Stomach (tissue), 19 donors: ENCODE measurements at regions of chr18 and their contacts with region 1.

Region 1: DNA sequence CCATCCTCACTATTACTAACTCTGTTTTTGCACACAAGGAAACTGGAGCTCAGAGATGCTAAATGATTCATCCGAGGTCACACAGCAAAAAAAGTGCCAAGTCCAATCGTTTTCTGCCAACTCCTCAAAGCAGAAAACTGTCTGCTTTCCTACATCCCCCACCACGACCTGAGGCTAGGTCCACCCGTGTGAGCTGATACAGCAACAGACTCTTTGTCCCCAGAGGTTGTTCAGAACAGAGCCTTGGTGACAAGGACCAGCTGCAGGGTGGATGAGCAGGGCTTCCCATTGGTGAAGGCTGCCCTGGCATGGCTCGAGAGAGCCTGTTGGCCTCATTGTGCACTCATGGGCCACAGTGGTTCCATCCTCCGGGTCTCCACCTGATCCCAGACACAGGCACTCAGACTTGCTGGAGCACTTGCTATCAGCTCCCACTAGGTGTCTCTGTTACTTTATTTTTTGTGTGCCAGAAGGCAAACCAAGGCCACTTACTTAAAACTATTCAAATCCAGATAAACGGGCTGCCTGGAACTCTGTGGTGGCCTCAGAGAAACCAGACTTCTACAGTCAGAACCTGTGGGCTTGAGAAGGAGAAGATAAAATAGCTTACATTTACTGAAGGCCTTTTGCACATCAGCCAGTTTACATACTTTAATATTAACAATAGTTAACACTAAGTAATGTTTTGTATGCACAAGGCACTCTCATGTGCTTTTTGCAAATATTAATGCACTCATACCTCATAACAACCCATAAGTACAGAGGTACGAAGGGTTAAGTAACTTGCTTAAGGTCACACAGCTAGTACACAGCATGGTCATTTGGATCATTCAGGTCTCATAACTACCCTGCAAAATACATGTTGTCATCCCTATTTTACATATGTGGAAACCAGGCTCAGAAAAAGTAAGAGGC is 62.9 kb upstream of the CTIF start:
- DNase-seq: peak; percentile 53 to 87
- H3K4me3 ChIP-seq: no peak overlapping the region
- H3K27ac ChIP-seq: no peak overlapping the region
- H3K4me1 ChIP-seq: peaks cover 0 to 11% (median 4%) of the 10 kb centered on the region in 4 donors
- H3K27me3 ChIP-seq: no peaks in the 10 kb centered on the region
- CTCF ChIP-seq: peak in 5 of 7 experiments; percentile 73 to 81 (median 76)
- EP300 ChIP-seq: no peak
- POLR2A ChIP-seq: no peak

Region 2: DNA sequence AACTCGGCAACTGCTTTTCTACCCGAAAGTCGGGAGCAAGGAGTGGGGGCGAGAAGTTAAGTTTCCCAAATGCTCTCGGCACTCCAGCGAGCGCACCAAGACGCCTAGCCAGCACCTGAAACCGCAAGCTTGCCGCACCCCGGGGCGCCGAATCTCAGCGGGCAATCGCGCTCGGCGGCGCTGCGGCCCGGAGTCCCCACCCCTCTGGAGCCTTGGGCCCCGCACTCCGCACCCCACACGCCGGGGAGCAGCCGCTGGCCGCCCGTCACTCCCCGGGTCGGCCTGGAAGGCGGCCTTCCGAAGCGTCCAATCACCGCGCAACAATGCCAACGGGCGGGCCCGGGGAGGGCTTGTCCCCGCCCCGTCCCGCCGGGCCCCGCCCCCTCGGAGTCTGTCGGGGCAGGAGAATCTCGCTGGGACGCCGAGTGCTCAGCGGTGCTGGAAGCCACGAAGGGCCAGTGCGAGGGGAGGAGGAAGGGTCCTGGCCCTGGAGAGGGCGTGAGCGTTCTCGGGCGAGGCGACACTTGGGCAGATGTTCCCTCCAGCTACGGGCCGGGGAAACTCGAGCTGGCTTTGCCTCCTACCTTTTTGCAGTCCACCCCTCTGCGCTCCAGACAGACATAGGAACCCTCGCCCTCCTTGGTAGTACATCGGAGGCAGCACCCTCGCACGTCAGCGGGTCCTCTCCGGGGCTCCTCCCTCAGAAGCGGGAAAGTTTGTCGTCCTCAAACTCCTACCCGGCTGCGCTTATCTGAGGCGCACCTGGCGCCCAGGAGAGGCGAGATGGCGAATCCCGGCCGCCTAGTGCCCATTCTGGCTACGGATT is 65.6 kb before region 1 on chr18:
- intact Hi-C with region 1: no loop called
- DNase-seq: peak; percentile 94 to 96
- H3K4me3 ChIP-seq: peak overlapping the region; percentile 72 to 99 (median 82)
- H3K27ac ChIP-seq: peak overlapping the region; percentile 59 to 83 (median 67)
- H3K4me1 ChIP-seq: peaks cover 12 to 36% (median 26%) of the 10 kb centered on the region in 4 donors
- H3K27me3 ChIP-seq: peaks cover 0 to 92% (median 30%) of the 10 kb centered on the region in 3 donors
- CTCF ChIP-seq: no peak
- EP300 ChIP-seq: no peak
- POLR2A ChIP-seq: no peak

Region 3: GRCh38 chr18:48663931-48664847 is 188.3 kb after region 1 on chr18:
- intact Hi-C with region 1: loop called (anchors 5 kb)
- DNase-seq: peak; percentile 73 to 81
- H3K4me3 ChIP-seq: no peak overlapping the region
- H3K27ac ChIP-seq: no peak overlapping the region
- H3K4me1 ChIP-seq: peaks cover 15 to 47% (median 33%) of the 10 kb centered on the region in 4 donors
- H3K27me3 ChIP-seq: no peaks in the 10 kb centered on the region
- CTCF ChIP-seq: peak in 5 of 7 experiments; percentile 85 to 89 (median 87)
- EP300 ChIP-seq: no peak
- POLR2A ChIP-seq: no peak